A673 (cell line): ENCODE measurements at regions of chr13 and their contacts with region 1.

Region 1: GRCh38 chr13:63124863-63125262 is 1709.2 kb upstream of the PCDH20 start:
- DNase-seq: peak; percentile 57
- H3K4me3 ChIP-seq: no peak overlapping the region
- H3K27ac ChIP-seq: no peak overlapping the region
- H3K4me1 ChIP-seq: peaks cover 14% of the 10 kb centered on the region
- H3K27me3 ChIP-seq: no peaks in the 10 kb centered on the region
- CTCF ChIP-seq: peak; percentile 66

Region 2: DNA sequence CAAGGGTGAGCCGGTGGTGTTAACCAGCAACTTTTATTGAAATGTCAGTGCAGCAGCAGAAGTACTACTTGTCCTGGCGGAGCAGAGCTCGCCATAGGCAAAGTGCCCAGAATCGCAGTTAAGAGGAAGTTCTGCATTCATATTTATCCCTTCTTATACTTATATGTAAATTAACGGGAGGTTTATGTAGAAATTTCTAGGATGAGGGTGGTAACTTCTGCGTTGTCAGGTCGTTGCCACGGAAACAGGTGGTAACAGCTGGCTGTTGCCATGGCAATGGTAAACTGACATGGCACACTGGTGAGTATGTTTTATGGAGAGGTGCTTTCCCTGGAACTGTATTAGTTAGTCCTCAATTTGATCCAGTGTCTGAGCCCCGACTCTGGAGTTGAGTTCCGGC is 785.6 kb after region 1 on chr13:
- CTCF ChIA-PET with region 1: no interaction called
- POLR2A ChIA-PET with region 1: no interaction called
- intact Hi-C with region 1: loop called (anchors 10 kb)
- DNase-seq: peak; percentile 52
- H3K4me3 ChIP-seq: no peak overlapping the region
- H3K27ac ChIP-seq: no peak overlapping the region
- H3K4me1 ChIP-seq: peaks cover 14% of the 10 kb centered on the region
- H3K27me3 ChIP-seq: no peaks in the 10 kb centered on the region
- CTCF ChIP-seq: no peak

Region 3: GRCh38 chr13:64088491-64088890 is 963.6 kb after region 1 on chr13:
- CTCF ChIA-PET with region 1: no interaction called
- POLR2A ChIA-PET with region 1: no interaction called
- intact Hi-C with region 1: loop called (anchors 5 kb)
- DNase-seq: peak; percentile 57
- H3K4me3 ChIP-seq: peak overlapping the region; percentile 41
- H3K27ac ChIP-seq: peak overlapping the region; percentile 98
- H3K4me1 ChIP-seq: peaks cover 26% of the 10 kb centered on the region
- H3K27me3 ChIP-seq: no peaks in the 10 kb centered on the region
- CTCF ChIP-seq: no peak